ENCODE measurements at regions of chr13 and their contacts with region 1.

Region 1: GRCh38 chr13:73417015-73417623 is 358.3 kb downstream of the KLF5 start:
- DNase-seq: no peak
- H3K4me3 Mint-ChIP-seq: no peak overlapping the region
- H3K27ac Mint-ChIP-seq: no peak overlapping the region
- H3K4me1 Mint-ChIP-seq: peaks cover 8% of the 10 kb centered on the region
- H3K27me3 Mint-ChIP-seq: no peaks in the 10 kb centered on the region
- CTCF ChIP-seq: no peak

Region 2: DNA sequence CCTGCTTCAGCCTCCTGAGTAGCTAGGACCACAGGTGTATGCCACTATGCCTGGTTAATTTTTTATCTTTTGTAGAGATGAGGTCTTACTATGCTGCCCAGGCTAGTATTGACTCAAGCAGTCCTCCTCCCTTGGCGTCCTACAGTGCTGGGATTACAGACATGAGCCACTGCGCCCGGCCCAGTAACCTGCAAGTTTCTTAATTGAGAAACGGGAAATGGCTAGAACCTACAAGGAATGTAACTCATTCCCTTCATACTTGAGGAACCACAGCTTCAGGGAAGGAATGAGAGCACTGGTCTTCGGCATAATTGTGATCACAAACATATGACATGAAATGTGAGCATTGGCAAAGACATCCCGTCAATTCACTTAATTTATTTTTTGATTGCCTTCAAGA is 201.3 kb before region 1 on chr13:
- CTCF ChIA-PET with region 1: no interaction called
- intact Hi-C with region 1: loop called (anchors 10 kb)
- DNase-seq: peak; percentile 55
- H3K4me3 Mint-ChIP-seq: peak overlapping the region; percentile 14
- H3K27ac Mint-ChIP-seq: peak overlapping the region; percentile 79
- H3K4me1 Mint-ChIP-seq: peaks cover 24% of the 10 kb centered on the region
- H3K27me3 Mint-ChIP-seq: no peaks in the 10 kb centered on the region
- CTCF ChIP-seq: no peak

Region 3: DNA sequence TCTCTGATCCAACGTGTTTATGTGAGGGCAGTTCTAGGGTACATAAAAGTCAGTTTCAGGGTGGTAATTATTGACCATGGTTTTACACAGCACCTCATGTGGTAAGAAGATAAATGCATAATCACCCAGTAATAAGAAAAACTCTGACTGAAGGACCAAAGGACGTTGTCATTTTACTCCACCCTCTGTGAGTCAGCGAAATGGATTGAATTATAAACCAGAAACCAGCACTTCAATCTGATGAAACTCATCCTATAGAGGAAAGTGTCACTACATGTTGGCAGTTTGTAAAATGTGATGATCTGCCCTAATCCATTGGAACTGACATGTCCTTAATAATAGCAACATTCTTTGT is 48.5 kb after region 1 on chr13:
- CTCF ChIA-PET with region 1: no interaction called
- intact Hi-C with region 1: loop called (anchors 5 kb)
- DNase-seq: peak; percentile 13
- H3K4me3 Mint-ChIP-seq: no peak overlapping the region
- H3K27ac Mint-ChIP-seq: peak overlapping the region; percentile 86
- H3K4me1 Mint-ChIP-seq: no peaks in the 10 kb centered on the region
- H3K27me3 Mint-ChIP-seq: no peaks in the 10 kb centered on the region
- CTCF ChIP-seq: no peak

Region 4: GRCh38 chr13:73610799-73611592 is 193.9 kb after region 1 on chr13:
- CTCF ChIA-PET with region 1: no interaction called
- intact Hi-C with region 1: loop called (anchors 2 kb)
- DNase-seq: peak; percentile 10
- H3K4me3 Mint-ChIP-seq: no peak overlapping the region
- H3K27ac Mint-ChIP-seq: no peak overlapping the region
- H3K4me1 Mint-ChIP-seq: no peaks in the 10 kb centered on the region
- H3K27me3 Mint-ChIP-seq: no peaks in the 10 kb centered on the region
- CTCF ChIP-seq: no peak

Region 5: DNA sequence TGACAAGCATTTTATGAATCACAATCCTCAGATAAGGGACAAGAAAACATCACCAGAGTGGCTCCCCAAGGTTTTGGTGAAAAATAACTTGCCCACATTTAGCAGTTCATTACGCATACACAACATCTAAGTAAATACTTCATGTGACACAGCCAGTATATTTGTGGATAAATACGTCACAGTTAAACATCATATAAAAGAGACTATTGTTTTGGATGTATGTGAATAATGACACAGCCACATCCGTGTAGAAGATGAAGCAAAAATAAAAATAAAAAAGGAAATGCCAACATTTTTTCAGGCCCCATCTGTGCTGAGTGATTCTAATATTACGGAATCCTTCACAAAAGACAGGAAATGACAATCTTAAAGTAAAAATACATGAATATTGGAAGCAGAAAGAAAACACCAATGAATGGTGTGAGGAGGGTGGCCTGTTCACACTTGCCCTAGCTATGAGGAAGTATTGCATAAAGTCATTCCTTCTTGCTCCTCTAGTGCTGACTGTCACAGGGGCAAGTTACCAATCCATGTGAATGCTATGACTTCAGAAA is 260.0 kb after region 1 on chr13:
- CTCF ChIA-PET with region 1: no interaction called
- intact Hi-C with region 1: loop called (anchors 1 kb)
- DNase-seq: peak; percentile 4
- H3K4me3 Mint-ChIP-seq: no peak overlapping the region
- H3K27ac Mint-ChIP-seq: peak overlapping the region; percentile 95
- H3K4me1 Mint-ChIP-seq: peaks cover 12% of the 10 kb centered on the region
- H3K27me3 Mint-ChIP-seq: no peaks in the 10 kb centered on the region
- CTCF ChIP-seq: no peak

Measured in Calu3 (cell line).